PC-9 (cell line): ENCODE measurements at regions of chr1 and their contacts with region 1.

Region 1: GRCh38 chr1:180947901-180948640 is 35.4 kb downstream of the KIAA1614 start:
- DNase-seq: peak in 1 of 2 experiments; percentile 39
- H3K4me3 ChIP-seq: no peak overlapping the region
- H3K27ac ChIP-seq: no peak overlapping the region
- H3K4me1 ChIP-seq: no peaks in the 10 kb centered on the region
- H3K27me3 ChIP-seq: no peaks in the 10 kb centered on the region
- CTCF ChIP-seq: no peak

Region 2: DNA sequence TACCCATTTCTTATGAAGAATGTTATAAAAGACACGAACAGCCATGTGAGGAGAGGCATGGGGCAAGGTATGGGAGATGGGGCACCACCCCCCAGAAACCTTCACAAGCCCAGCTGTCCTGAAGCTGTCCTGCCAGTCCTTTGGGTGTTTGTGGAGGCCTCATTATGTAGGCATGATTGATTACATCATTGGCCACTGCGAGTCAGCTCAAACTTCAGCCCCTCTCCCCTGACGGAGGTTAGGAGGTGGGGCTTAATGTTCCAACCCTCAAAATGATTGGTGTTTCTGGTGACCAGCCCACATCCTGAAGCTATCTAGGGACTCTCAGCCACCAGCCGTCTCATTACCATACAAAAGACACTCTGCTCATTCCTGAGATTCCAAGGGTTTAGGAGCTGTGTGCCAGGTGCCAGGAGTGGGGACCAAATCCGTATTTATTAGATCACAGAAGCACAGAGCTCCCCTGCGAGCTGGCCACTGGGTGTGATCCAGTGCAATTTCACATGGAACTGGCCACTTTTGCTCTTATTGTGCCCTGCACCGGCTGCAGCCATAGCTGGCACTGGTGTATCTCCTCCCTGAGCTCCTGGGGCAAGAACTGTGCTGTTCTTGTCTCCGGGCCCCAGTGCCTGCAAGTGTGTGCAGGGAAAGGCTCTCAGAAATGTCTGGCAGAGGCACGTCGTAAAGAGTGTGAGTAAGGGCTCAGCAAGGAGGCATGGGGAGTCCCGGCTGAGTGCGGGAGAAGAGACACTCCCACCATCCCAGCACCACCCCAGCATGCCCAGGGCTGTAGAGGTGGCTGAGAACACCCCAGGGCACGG is 24.8 kb before region 1 on chr1:
- CTCF ChIA-PET with region 1: no interaction called
- POLR2A ChIA-PET with region 1: interaction called, 20 read pairs
- intact Hi-C with region 1: no loop called
- DNase-seq: peak; percentile 62 to 67
- H3K4me3 ChIP-seq: no peak overlapping the region
- H3K27ac ChIP-seq: no peak overlapping the region
- H3K4me1 ChIP-seq: peaks cover 14% of the 10 kb centered on the region
- H3K27me3 ChIP-seq: no peaks in the 10 kb centered on the region; the same call in 1 of the 2 replicates
- CTCF ChIP-seq: no peak

Region 3: DNA sequence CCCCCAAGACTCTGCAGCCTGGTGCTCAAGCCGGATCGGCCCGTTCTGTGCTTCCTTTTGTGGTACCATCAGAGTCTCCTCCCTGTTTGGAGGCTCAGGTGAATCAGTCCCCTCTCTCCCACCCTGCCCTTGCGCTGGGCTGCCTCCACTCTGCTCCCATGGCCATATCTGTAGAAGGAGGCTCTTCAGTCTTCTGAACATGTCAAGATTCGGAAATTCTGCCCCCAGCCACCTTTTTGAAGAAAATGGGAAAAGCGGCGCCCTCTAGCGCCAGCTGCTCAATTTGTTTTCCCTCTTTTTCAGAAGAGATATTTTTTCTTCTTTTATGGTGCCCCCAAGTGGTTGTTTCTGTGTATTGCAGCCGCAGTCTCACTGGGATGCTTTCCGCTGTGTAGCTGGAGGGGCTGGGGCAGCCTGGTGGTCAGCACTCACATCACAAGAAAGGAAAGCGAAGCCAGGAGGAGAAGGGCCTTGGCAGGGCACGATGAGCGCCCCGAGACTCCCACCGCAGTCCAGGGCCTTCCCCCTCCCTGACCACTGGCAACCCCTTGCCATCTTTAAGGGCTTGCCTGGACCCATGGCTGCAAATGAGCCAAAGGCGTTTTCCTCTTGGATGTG is 476.8 kb after region 1 on chr1:
- CTCF ChIA-PET with region 1: no interaction called
- POLR2A ChIA-PET with region 1: no interaction called
- intact Hi-C with region 1: no loop called
- DNase-seq: peak; percentile 37 to 60
- H3K4me3 ChIP-seq: no peak overlapping the region
- H3K27ac ChIP-seq: no peak overlapping the region
- H3K4me1 ChIP-seq: no peaks in the 10 kb centered on the region
- H3K27me3 ChIP-seq: peaks cover 15% of the 10 kb centered on the region; the same call in 1 of the 2 replicates
- CTCF ChIP-seq: peak; percentile 98